Activated CD4-positive, alpha-beta T cell treated with anti-CD3 and anti-CD28 coated beads, Interleukin-2, amount 10 ng/mL, durations not matched to agents 24 days and 14 days (primary cell): ENCODE measurements at regions of chr2 and their contacts with region 1.

Region 1: DNA sequence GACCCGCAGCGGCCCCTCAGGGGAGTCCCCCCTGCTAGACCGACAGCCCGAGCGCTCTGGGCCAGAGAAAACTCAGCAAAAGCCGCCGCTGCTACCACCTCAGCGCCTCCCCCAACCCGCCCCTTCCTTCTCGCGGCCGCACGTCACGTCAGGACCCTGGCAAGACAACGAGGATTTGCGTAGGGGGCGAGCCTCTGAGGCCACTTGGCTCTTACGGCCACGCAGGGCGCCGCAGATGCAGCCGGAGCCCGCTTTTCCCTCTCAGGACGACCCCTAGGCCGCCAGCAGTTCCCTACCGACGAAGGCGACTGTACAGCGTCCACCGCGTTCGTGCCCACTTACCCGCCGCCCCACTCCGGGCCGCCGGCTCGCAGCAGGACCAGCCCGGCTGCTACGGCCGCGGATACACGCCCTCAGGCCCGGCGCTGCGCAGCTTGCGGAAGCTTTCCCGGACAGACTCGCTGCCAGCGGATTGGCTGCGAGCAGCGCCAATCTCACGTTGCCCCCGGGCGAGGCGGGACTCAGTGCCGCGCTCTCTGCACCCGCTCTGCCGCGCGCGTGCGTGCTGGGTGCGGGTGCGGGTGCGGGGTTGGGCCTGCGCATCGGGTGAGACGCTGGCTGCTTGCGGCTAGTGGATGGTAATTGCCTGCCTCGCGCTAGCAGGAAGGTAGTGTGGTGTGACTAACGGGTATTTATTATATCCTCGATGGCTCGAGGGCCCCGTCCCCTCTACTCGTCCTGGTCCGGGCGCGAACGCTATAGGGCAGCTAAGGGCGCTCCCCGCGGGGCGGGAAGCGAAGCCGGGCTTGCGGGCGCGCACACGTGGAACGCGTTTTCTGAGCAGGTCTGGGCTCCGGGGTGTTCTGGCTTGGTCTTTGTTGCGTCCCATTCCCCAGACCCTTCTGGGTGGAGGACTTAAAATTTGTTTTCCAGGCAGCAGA is at the starts of genes ORMDL1 and PMS1:
- DNase-seq: peak; percentile 99
- H3K4me3 Mint-ChIP-seq: peak within 1 kb of the TSS; percentile 86
- H3K27ac Mint-ChIP-seq: peak within 1 kb of the TSS; percentile 86
- H3K4me1 Mint-ChIP-seq: peaks cover 37% of the 10 kb centered on the region
- H3K27me3 Mint-ChIP-seq: no peaks in the 10 kb centered on the region
- total RNA-seq, gene ORMDL1: 74.5 and 82.7 TPM in 2 replicates
- total RNA-seq, gene PMS1: 67.2 and 69.2 TPM in 2 replicates

Region 2: DNA sequence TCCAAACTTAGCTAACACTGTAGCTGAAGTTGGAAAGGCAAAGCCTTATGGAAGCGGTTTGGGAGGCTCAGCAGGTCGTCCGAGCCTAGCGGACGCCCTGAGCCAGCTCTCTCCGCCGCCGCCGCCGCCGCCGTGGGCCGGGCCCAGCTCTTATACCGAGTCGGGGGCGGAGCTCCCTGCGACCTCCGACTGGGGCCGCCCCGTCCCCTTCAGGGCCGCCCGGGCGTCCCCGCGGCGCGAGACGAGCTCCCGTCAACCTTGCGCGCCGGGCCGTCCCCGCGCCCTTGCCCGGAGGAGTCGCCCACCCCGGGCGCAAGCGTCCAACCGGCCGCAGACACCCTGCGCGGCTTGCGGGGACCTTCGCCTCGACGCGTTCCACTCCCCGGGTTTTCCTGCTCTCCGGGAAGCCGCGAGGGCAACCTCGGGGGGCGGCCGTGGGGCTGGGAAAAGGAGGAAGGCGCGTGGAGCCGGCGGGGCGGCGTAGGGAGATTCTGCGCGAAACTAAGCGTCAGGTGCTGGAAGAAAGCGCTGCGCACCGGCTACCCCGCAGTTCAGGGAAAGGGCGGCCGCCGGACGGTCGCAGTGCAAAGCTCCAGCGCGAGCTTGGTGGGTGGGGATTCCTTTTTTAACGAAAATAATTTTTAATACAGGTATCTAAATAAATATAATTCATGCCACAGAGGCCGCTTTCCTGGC is 203.4 kb before region 1 on chr2 and contains the start of gene SLC40A1:
- intact Hi-C with region 1: loop called (anchors 1 kb)
- DNase-seq: peak; percentile 91
- H3K4me3 Mint-ChIP-seq: peak within 1 kb of the TSS; percentile 84
- H3K27ac Mint-ChIP-seq: peak within 1 kb of the TSS; percentile 35
- H3K4me1 Mint-ChIP-seq: peaks cover 18% of the 10 kb centered on the region
- H3K27me3 Mint-ChIP-seq: peaks cover 34% of the 10 kb centered on the region
- total RNA-seq, gene SLC40A1: 0.78 and 1.4 TPM in 2 replicates

Region 3: GRCh38 chr2:189762551-189763298 is 21.5 kb before region 1 on chr2 and contains the start of gene OSGEPL1:
- intact Hi-C with region 1: loop called (anchors 1 kb)
- DNase-seq: peak; percentile 97
- H3K4me3 Mint-ChIP-seq: peak within 1 kb of the TSS; percentile 97
- H3K27ac Mint-ChIP-seq: peak within 1 kb of the TSS; percentile 98
- H3K4me1 Mint-ChIP-seq: peaks cover 12% of the 10 kb centered on the region
- H3K27me3 Mint-ChIP-seq: no peaks in the 10 kb centered on the region
- total RNA-seq, gene OSGEPL1: 11.1 and 12.2 TPM in 2 replicates

Region 4: GRCh38 chr2:190319555-190320498 is 535.6 kb after region 1 on chr2 and contains the start of gene HIBCH:
- intact Hi-C with region 1: loop called (anchors 1 kb)
- DNase-seq: peak; percentile 96
- H3K4me3 Mint-ChIP-seq: peak within 1 kb of the TSS; percentile 95
- H3K27ac Mint-ChIP-seq: peak within 1 kb of the TSS; percentile 94
- H3K4me1 Mint-ChIP-seq: peaks cover 35% of the 10 kb centered on the region
- H3K27me3 Mint-ChIP-seq: peaks cover 2% of the 10 kb centered on the region
- total RNA-seq, gene HIBCH: 26.7 and 29.1 TPM in 2 replicates

Region 5: GRCh38 chr2:191013932-191014652 is 1229.9 kb after region 1 on chr2 and contains the start of gene STAT1:
- intact Hi-C with region 1: loop called (anchors 10 kb)
- DNase-seq: peak; percentile 100
- H3K4me3 Mint-ChIP-seq: no peak within 1 kb of the TSS
- H3K27ac Mint-ChIP-seq: no peak within 1 kb of the TSS
- H3K4me1 Mint-ChIP-seq: peaks cover 37% of the 10 kb centered on the region
- H3K27me3 Mint-ChIP-seq: no peaks in the 10 kb centered on the region
- total RNA-seq, gene STAT1: 152 and 160 TPM in 2 replicates